Activated CD4-positive, alpha-beta memory T cell treated with anti-CD3 and anti-CD28 coated beads, Interleukin-2, amount 10 ng/mL, durations not matched to agents 7 days and 5 days (primary cell): ENCODE measurements at regions of chr12 and their contacts with region 1.

Region 1: GRCh38 chr12:50111693-50112455 is at the start of gene COX14:
- DNase-seq: peak; percentile 99
- H3K4me3 Mint-ChIP-seq: peak within 1 kb of the TSS; percentile 93
- H3K27ac Mint-ChIP-seq: peak within 1 kb of the TSS; percentile 96
- H3K4me1 Mint-ChIP-seq: peaks cover 44% of the 10 kb centered on the region
- H3K27me3 Mint-ChIP-seq: no peaks in the 10 kb centered on the region
- total RNA-seq, gene COX14: 53.5 to 55.3 TPM

Region 2: GRCh38 chr12:50074936-50075807 is 36.7 kb before region 1 on chr12:
- CTCF ChIA-PET with region 1: interaction called, 27 read pairs
- POLR2A ChIA-PET with region 1: interaction called, 4 read pairs
- DNase-seq: peak; percentile 83
- H3K4me3 Mint-ChIP-seq: no peak overlapping the region
- H3K27ac Mint-ChIP-seq: no peak overlapping the region
- H3K4me1 Mint-ChIP-seq: peaks cover 6% of the 10 kb centered on the region
- H3K27me3 Mint-ChIP-seq: peaks cover 4% of the 10 kb centered on the region

Region 3: GRCh38 chr12:50132505-50133135 is 20.7 kb after region 1 on chr12:
- CTCF ChIA-PET with region 1: interaction called, 36 read pairs
- POLR2A ChIA-PET with region 1: interaction called, 23 read pairs
- DNase-seq: no peak
- H3K4me3 Mint-ChIP-seq: no peak overlapping the region
- H3K27ac Mint-ChIP-seq: peak overlapping the region; percentile 30
- H3K4me1 Mint-ChIP-seq: peaks cover 7% of the 10 kb centered on the region
- H3K27me3 Mint-ChIP-seq: no peaks in the 10 kb centered on the region

Region 4: GRCh38 chr12:50167041-50167828 is 55.4 kb after region 1 on chr12 and contains the start of gene CERS5:
- CTCF ChIA-PET with region 1: interaction called, 66 read pairs
- POLR2A ChIA-PET with region 1: interaction called, 60 read pairs
- DNase-seq: peak; percentile 99
- H3K4me3 Mint-ChIP-seq: peak within 1 kb of the TSS; percentile 97
- H3K27ac Mint-ChIP-seq: peak within 1 kb of the TSS; percentile 89
- H3K4me1 Mint-ChIP-seq: peaks cover 31% of the 10 kb centered on the region
- H3K27me3 Mint-ChIP-seq: no peaks in the 10 kb centered on the region
- total RNA-seq, gene CERS5: 48.4 to 56.3 TPM

Region 5: GRCh38 chr12:50211392-50212070 is 99.7 kb after region 1 on chr12:
- CTCF ChIA-PET with region 1: interaction called, 10 read pairs
- POLR2A ChIA-PET with region 1: interaction called, 5 read pairs
- DNase-seq: no peak
- H3K4me3 Mint-ChIP-seq: peak overlapping the region; percentile 38
- H3K27ac Mint-ChIP-seq: peak overlapping the region; percentile 87
- H3K4me1 Mint-ChIP-seq: peaks cover 51% of the 10 kb centered on the region
- H3K27me3 Mint-ChIP-seq: no peaks in the 10 kb centered on the region

Region 6: DNA sequence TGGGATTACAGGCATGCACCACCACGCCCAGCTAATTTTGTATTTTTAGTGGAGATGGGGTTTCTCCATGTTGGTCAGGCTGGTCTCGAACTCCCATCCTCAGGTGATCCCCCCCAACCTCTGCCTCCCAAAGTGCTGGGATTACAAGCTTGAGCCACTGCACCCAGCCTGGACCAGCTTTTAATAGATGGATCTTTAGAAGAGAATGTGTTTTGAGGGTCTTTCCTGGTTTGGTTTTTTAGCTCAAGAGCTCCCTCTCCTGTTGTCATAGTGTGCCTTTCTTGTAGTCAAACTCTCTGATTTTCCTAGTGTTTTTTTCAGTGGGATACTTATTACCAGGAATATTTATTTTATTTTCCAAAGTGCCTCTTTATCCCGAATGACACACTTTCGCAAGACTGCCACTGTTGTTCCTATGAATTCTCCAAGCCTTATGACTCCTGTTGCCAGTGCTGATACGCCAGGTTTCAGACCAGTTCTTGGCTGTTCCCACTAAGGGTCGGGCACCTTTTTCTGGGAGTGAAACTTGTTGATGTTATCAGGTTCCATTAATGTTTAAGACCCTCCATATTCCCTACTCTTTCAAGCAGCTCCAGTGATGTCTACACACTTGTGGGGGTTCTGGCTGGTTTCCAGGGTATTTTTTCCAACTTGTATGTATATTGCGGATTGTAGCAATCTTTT is 202.9 kb after region 1 on chr12:
- CTCF ChIA-PET with region 1: interaction called, 16 read pairs
- POLR2A ChIA-PET with region 1: interaction called, 5 read pairs
- DNase-seq: no peak
- H3K4me3 Mint-ChIP-seq: no peak overlapping the region
- H3K27ac Mint-ChIP-seq: no peak overlapping the region
- H3K4me1 Mint-ChIP-seq: peaks cover 6% of the 10 kb centered on the region
- H3K27me3 Mint-ChIP-seq: no peaks in the 10 kb centered on the region